Heart left ventricle (tissue), 16 donors: ENCODE measurements at regions of chr11 and their contacts with region 1.

Region 1: GRCh38 chr11:122327528-122327927 is 211.5 kb upstream of the BLID start:
- DNase-seq: no peak
- ATAC-seq: no peak
- H3K4me3 ChIP-seq: no peak overlapping the region
- H3K27ac ChIP-seq: no peak overlapping the region
- H3K4me1 ChIP-seq: peaks cover 0 to 17% (median 0%) of the 10 kb centered on the region in 12 donors
- H3K27me3 ChIP-seq: no peaks in the 10 kb centered on the region
- CTCF ChIP-seq: no peak
- POLR2A ChIP-seq: no peak

Region 2: DNA sequence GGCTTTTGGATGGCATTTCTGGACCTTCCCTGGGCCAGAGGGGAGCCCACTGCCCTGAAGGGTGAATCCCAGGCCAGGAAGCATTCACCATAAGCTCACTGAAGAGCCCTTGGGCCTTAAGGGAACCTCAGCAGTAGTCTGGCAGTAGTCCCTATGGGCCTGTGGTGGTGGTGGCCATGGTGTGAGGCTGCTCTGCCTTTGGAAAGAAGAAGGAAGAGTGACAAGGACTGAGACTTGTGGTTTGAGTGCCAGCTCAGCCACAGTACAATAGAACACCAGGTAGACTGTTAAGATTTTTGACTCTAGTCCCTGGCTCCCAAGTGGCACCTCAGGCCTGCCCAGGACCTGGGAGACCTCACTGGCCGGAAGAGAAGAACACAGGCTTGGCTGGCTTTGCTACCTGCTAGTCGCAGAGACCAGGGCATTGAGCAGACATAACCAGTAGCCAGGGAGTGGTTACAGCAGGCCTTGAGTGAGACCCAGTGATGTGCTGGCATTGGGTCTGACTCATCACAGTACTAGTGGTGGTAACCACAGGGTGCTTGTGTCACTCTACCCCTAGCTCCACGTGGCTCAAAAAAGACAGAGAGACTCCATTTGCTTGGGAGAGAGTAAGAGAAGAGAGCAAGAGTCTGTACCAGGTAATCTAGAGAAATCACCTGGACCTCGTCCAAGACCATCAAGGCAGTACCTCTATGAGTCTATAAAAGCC is 48.3 kb after region 1 on chr11:
- intact Hi-C with region 1: loop called in 1 of 10 experiments (anchors 2 kb)
- DNase-seq: no peak
- ATAC-seq: no peak
- H3K4me3 ChIP-seq: no peak overlapping the region
- H3K27ac ChIP-seq: no peak overlapping the region
- H3K4me1 ChIP-seq: no peaks in the 10 kb centered on the region
- H3K27me3 ChIP-seq: no peaks in the 10 kb centered on the region
- CTCF ChIP-seq: no peak
- POLR2A ChIP-seq: no peak